Activated CD4-positive, alpha-beta memory T cell treated with anti-CD3 and anti-CD28 coated beads for 36 hours (primary cell): ENCODE measurements at regions of chr7 and their contacts with region 1.

Region 1: GRCh38 chr7:87225696-87226095 is 6.2 kb upstream of the TMEM243 start:
- DNase-seq: no peak
- H3K4me3 Mint-ChIP-seq: no peak overlapping the region
- H3K27ac Mint-ChIP-seq: no peak overlapping the region
- H3K4me1 Mint-ChIP-seq: peaks cover 16% of the 10 kb centered on the region
- H3K27me3 Mint-ChIP-seq: no peaks in the 10 kb centered on the region

Region 2: GRCh38 chr7:87213811-87214210 is 11.9 kb before region 1 on chr7:
- CTCF ChIA-PET with region 1: no interaction called
- POLR2A ChIA-PET with region 1: interaction called, 3 read pairs
- intact Hi-C with region 1: loop called (anchors 1 kb)
- DNase-seq: no peak
- H3K4me3 Mint-ChIP-seq: peak overlapping the region; percentile 24
- H3K27ac Mint-ChIP-seq: peak overlapping the region; percentile 79
- H3K4me1 Mint-ChIP-seq: peaks cover 79% of the 10 kb centered on the region
- H3K27me3 Mint-ChIP-seq: no peaks in the 10 kb centered on the region

Region 3: GRCh38 chr7:87263537-87263936 is 37.8 kb after region 1 on chr7:
- CTCF ChIA-PET with region 1: no interaction called
- POLR2A ChIA-PET with region 1: no interaction called
- intact Hi-C with region 1: no loop called
- DNase-seq: no peak
- H3K4me3 Mint-ChIP-seq: no peak overlapping the region
- H3K27ac Mint-ChIP-seq: no peak overlapping the region
- H3K4me1 Mint-ChIP-seq: no peaks in the 10 kb centered on the region
- H3K27me3 Mint-ChIP-seq: peaks cover 23% of the 10 kb centered on the region